Psoas muscle (tissue), 8 donors: ENCODE measurements at regions of chr5 and their contacts with region 1.

Region 1: GRCh38 chr5:163437309-163438182 is at the start of gene CCNG1:
- DNase-seq: peak; percentile 91 to 95
- ATAC-seq: peak; percentile 85 to 94 (median 87)
- H3K4me3 ChIP-seq: peak within 1 kb of the TSS; percentile 94
- H3K27ac ChIP-seq: peak within 1 kb of the TSS; percentile 96
- H3K4me1 ChIP-seq: peaks cover 38% of the 10 kb centered on the region
- H3K27me3 ChIP-seq: no peaks in the 10 kb centered on the region
- CTCF ChIP-seq: no peak
- total RNA-seq, gene CCNG1: 91.2 to 120 (median 109) TPM

Region 2: DNA sequence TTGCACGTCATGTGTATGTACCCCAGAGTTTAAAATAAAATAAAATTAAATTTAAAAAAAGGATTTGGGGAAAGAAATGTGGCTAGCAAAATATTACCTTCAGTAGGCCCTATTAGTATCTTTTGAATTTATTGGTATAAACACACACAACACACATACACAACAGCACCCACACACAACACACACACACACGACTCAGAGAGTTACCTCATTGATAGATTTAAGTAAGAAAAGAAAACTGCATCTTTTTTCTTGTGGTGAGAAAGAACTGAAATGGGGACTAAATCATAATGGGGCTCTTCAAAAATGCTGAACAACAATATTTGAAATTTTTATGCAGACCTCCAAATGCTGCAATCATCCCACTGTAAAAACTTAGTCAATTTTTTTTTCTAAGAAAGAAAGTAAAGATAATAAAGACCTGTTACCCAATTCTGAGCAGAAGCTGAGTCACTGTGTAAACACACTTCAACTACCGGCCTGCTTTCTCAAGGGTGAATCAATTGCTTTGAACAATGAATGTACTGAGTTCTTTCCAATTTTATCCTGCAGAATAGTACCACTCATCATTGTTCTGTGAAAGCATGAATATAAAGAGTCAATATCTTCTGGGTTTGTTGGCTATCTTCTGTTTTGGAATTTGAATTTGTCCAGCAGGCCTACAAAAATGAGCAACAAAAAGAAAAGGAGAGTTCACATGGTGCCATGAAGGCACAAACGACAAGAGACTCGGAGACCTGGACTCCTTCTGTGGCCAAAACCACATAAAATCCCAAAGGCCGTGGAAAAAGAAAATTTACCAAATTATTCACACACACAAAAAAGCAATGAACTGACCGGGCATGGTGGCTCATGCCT is 58.0 kb before region 1 on chr5:
- intact Hi-C with region 1: no loop called
- DNase-seq: no peak
- ATAC-seq: no peak
- H3K4me3 ChIP-seq: no peak overlapping the region
- H3K27ac ChIP-seq: no peak overlapping the region
- H3K4me1 ChIP-seq: peaks cover 2% of the 10 kb centered on the region
- H3K27me3 ChIP-seq: peaks cover 0 to 2% (median 0%) of the 10 kb centered on the region in 3 donors
- CTCF ChIP-seq: no peak

Region 3: GRCh38 chr5:163459922-163460766 is 22.6 kb after region 1 on chr5 and contains the starts of genes HMMR and NUDCD2:
- intact Hi-C with region 1: loop called in 1 of 2 experiments (anchors 1 kb)
- DNase-seq: peak; percentile 96 to 99
- ATAC-seq: peak; percentile 91 to 96 (median 94)
- H3K4me3 ChIP-seq: peak within 1 kb of the TSS; percentile 78
- H3K27ac ChIP-seq: peak within 1 kb of the TSS; percentile 95
- H3K4me1 ChIP-seq: peaks cover 30% of the 10 kb centered on the region
- H3K27me3 ChIP-seq: no peaks in the 10 kb centered on the region
- CTCF ChIP-seq: no peak
- total RNA-seq, gene HMMR: 0.14 to 1.4 (median 0.65) TPM
- total RNA-seq, gene NUDCD2: 13.6 to 26.3 (median 16.7) TPM